Activated CD4-positive, alpha-beta memory T cell treated with anti-CD3 and anti-CD28 coated beads for 36 hours (primary cell): ENCODE measurements at regions of chr5 and their contacts with region 1.

Region 1: DNA sequence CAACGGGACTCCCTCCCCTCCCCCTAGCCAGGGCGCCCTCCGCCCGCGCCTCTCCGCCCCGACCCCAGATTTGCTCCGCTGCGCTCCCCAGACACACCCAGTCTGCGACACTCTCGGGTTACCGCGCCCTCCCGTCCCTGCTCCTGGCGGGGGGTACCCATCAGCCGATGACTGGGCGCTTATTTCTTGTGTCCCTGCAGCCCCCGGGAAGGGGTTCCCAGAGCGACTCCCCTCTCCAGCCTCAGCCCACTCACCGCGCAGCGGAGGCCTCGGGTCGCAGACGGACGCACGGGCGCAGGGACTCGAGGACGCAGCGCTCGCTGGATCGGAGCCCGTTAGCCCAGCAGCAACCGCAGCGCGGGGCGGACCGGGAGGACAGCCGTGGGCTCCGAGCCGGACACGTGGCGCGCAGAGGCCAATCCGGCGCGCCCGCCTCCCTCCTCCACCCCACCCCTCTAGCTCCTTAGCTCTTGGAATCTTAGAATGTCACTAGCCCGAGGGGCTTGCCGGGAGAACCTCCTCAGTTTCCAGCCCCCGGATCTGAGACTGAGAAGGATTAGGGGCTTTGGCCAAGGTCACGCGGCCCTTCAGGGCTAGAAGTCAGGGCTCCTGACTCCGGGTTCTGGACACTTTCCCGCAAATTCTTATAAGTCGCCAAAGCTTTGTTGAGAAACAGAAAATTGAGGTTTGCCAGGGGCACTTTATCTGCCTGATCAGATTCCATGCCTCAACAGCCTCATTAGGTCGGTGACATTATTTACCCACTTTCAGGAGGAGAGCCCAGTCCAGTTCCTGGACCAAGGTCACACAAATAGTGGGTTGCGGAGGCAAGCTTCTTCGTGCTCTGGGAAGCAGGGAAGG is at the start of gene ANXA6:
- DNase-seq: peak; percentile 80
- H3K4me3 Mint-ChIP-seq: peak within 1 kb of the TSS; percentile 97
- H3K27ac Mint-ChIP-seq: peak within 1 kb of the TSS; percentile 90
- H3K4me1 Mint-ChIP-seq: peaks cover 52% of the 10 kb centered on the region
- H3K27me3 Mint-ChIP-seq: no peaks in the 10 kb centered on the region
- total RNA-seq, gene ANXA6: 430 to 443 TPM

Region 2: DNA sequence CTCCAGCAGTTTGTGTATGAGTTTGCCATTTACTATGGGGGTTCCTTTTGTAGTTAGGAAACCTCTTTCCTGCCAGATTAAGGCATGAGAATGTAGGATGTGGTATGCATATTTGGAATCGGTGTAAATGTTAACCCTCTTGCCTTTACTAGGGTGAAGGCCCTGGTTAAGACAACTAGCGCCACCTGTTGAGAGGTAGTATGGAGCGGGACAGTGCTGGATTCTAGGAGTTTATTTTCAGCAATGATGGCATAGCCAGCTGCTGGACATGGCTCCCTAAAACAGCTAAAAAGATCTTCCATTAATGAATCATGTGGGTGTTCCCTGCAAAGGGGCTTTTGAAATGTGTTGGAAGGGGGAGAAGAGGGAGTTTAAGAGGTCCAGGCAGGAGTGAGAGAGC is 168.0 kb before region 1 on chr5:
- CTCF ChIA-PET with region 1: no interaction called
- POLR2A ChIA-PET with region 1: no interaction called
- intact Hi-C with region 1: no loop called
- DNase-seq: peak; percentile 32
- H3K4me3 Mint-ChIP-seq: no peak overlapping the region
- H3K27ac Mint-ChIP-seq: no peak overlapping the region
- H3K4me1 Mint-ChIP-seq: no peaks in the 10 kb centered on the region
- H3K27me3 Mint-ChIP-seq: no peaks in the 10 kb centered on the region

Region 3: DNA sequence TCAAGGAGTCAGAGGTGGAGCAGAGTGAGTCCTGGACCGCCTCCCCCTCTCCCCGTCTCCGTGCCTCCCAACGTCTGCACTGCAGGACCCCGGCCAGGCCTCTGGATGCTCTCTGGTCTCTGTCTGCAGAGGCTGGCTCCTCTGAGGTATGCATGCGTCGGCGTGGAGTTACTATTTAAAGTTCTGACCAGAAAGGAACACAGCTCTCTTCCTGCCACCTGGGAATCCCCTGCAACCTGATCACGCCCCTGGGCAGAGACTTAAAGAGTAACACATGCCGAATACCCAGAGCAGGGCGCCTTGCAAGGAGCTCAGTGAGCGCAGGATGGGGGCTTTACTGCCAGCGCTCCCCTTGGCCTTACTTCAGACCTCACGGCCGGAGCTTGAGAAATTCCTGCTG is 16.1 kb before region 1 on chr5:
- CTCF ChIA-PET with region 1: interaction called, 553 read pairs
- POLR2A ChIA-PET with region 1: interaction called, 8 read pairs
- intact Hi-C with region 1: loop called (anchors 2 kb)
- DNase-seq: peak; percentile 84
- H3K4me3 Mint-ChIP-seq: peak overlapping the region; percentile 55
- H3K27ac Mint-ChIP-seq: peak overlapping the region; percentile 76
- H3K4me1 Mint-ChIP-seq: peaks cover 88% of the 10 kb centered on the region
- H3K27me3 Mint-ChIP-seq: no peaks in the 10 kb centered on the region